Panc1 (cell line): ENCODE measurements at regions of chr14 and their contacts with region 1.

Region 1: DNA sequence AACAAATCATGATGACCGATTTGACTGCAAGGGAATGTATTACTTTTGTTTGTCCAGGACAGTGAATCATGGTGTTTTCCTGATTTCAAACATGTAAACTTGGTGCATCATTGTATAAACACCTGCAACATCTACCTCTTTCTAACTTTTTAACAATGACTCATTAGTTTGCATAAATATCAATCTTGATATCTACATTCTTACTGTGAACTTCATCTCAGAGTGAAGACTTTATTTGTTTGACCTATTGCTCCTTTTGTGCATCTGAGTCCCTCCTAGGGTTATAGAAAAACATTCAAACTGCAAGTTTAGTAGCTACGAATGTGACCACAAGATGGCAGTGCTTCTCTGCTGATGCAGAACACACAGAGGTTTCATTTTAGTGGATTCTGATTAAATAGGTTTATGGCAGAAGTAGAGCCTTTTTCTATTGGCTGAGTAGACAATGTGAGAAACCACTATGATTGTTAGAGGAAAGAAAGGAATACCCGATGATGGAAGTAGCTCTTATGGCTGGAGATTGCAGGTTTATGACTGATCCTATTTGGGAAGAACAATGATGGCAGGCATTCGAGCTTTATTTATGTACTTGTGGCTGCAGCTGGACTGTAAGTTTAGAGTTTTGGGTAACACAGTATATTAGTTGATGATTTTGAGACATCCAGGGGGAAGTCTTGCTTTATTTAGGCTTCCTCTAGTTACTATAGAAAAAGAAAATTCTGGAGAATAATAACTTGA is 244.2 kb upstream of the OR4E1 start:
- DNase-seq: peak; percentile 79
- ATAC-seq: peak; percentile 89
- H3K4me3 ChIP-seq: peak overlapping the region in 1 of 2 experiments; percentile 19; a peak in 2 of 4 replicates
- H3K27ac ChIP-seq: no peak overlapping the region
- H3K4me1 ChIP-seq: no peaks in the 10 kb centered on the region
- H3K27me3 ChIP-seq: no peaks in the 10 kb centered on the region
- CTCF ChIP-seq: peak; percentile 75

Region 2: GRCh38 chr14:21987937-21988336 is 70.1 kb after region 1 on chr14:
- CTCF ChIA-PET with region 1: no interaction called
- POLR2A ChIA-PET with region 1: no interaction called
- in situ Hi-C with region 1: no loop called
- intact Hi-C with region 1: loop called (anchors 10 kb)
- DNase-seq: no peak
- ATAC-seq: no peak
- H3K4me3 ChIP-seq: no peak overlapping the region
- H3K27ac ChIP-seq: no peak overlapping the region
- H3K4me1 ChIP-seq: no peaks in the 10 kb centered on the region
- H3K27me3 ChIP-seq: no peaks in the 10 kb centered on the region; the same call in 1 of the 2 replicates
- CTCF ChIP-seq: peak; percentile 53